ENCODE measurements at regions of chr3 and their contacts with region 1.

Region 1: GRCh38 chr3:67478423-67478822 is 176.0 kb downstream of the SUCLG2 start:
- DNase-seq: no peak
- H3K4me3 ChIP-seq: no peak overlapping the region
- H3K27ac ChIP-seq: no peak overlapping the region
- H3K4me1 ChIP-seq: no peaks in the 10 kb centered on the region
- H3K27me3 ChIP-seq: no peaks in the 10 kb centered on the region
- CTCF ChIP-seq: no peak
- POLR2A ChIP-seq: no peak

Region 2: DNA sequence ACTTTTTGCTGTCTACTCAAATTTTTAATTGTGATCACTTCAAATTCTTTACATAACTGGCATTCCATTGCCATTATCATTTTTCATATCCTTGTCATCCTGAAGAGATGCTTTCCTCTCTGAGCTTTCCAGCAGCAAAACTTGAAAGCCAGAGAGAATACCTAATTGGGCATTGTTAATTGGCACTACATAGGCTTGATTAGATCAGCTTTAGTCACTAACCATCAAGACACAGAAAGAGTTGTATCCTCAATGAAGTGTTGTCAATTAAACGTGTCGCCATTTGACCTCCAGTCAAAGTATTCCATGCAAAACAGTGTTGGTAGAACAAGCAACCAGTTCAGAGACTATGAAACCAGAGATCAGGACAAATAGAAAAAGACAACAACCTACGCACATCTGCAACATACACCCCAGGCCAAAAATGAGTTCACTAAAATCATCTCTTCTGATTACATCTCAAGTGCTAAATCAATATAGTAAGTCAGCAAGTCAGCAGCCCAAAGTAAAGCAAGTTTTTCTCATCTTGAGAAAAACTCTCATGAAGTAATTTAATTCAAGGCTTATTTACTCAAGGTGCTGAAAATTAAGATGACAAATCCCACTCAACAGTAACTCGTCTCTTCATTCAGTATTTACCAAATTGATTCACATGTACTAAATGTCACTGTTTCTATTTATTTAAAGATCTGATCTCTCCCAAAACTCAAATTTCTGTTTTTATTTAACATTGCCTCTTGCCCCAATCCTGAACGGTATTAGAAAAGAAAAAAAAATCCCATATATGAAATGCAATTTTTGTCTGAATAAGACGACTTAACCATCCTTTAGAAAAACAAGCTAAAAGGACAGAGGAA is 53.1 kb after region 1 on chr3:
- intact Hi-C with region 1: loop called (anchors 2 kb)
- DNase-seq: no peak
- H3K4me3 ChIP-seq: no peak overlapping the region
- H3K27ac ChIP-seq: no peak overlapping the region
- H3K4me1 ChIP-seq: no peaks in the 10 kb centered on the region
- H3K27me3 ChIP-seq: no peaks in the 10 kb centered on the region
- CTCF ChIP-seq: no peak
- POLR2A ChIP-seq: no peak

Measured in vagina (tissue), 2 donors.